ENCODE measurements at regions of chr10 and their contacts with region 1.

Region 1: GRCh38 chr10:11639831-11640764 is 28.6 kb upstream of the USP6NL start:
- DNase-seq: peak; percentile 37 to 78 (median 57)
- ATAC-seq: peak; percentile 91 to 95 (median 92)
- H3K4me3 ChIP-seq: no peak overlapping the region
- H3K27ac ChIP-seq: peak overlapping the region in 2 of 3 donors; percentile 30 to 71
- H3K4me1 ChIP-seq: peaks cover 0 to 19% (median 8%) of the 10 kb centered on the region in 4 donors
- H3K27me3 ChIP-seq: no peaks in the 10 kb centered on the region
- CTCF ChIP-seq: no peak
- POLR2A ChIP-seq: no peak

Region 2: DNA sequence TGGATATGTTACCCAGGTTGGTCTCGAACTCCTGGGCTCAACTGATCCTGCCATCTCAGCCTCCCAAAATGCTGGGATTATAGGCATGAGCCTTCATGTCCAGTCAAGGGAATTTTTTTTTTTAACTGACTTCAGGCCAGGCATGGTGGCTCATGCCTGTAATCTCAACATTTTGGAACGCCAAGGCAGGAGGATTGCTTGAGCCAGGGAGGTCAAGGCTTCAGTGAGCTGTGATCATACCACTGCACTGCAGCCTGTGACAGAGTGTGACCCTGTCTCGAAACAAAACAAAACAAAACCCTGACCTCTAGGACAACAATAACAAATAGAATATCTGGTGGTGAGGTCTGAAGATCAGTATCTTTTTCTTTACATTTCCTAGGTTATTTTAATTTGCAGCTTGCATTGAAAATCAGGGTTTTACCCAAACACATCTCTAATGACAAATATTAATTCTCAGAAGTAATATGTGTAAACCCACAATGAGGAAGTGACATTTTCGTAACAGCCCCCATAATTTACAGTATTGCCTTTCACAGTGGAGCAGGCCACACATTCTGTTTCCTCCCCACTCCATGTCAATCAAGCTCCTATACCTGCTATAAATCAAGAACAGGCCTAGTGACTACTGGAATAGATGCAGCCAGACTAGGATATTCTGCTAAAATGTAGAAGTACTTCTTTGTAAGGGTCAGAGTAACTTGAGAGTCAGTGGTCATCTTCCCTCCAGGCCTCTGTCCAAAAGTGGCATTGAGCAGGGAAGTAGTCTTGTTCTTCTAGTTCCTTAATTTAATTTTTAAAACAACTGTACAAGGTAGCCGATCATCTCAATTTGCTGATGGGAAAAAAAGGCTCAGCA is 58.8 kb after region 1 on chr10:
- intact Hi-C with region 1: loop called (anchors 10 kb)
- DNase-seq: peak in 2 of 3 donors; percentile 33 to 76
- ATAC-seq: peak; percentile 67 to 70 (median 67)
- H3K4me3 ChIP-seq: no peak overlapping the region
- H3K27ac ChIP-seq: peak overlapping the region; percentile 58 to 85 (median 85)
- H3K4me1 ChIP-seq: peaks cover 0 to 36% (median 12%) of the 10 kb centered on the region in 4 donors
- H3K27me3 ChIP-seq: no peaks in the 10 kb centered on the region
- CTCF ChIP-seq: no peak
- POLR2A ChIP-seq: no peak

Region 3: GRCh38 chr10:11729726-11730315 is 89.7 kb after region 1 on chr10:
- intact Hi-C with region 1: no loop called
- DNase-seq: no peak
- ATAC-seq: peak in 1 of 4 donors; percentile 26
- H3K4me3 ChIP-seq: no peak overlapping the region
- H3K27ac ChIP-seq: no peak overlapping the region
- H3K4me1 ChIP-seq: no peaks in the 10 kb centered on the region
- H3K27me3 ChIP-seq: no peaks in the 10 kb centered on the region
- CTCF ChIP-seq: no peak
- POLR2A ChIP-seq: no peak

Region 4: GRCh38 chr10:11806706-11807105 is 166.6 kb after region 1 on chr10:
- intact Hi-C with region 1: no loop called
- DNase-seq: no peak
- ATAC-seq: no peak
- H3K4me3 ChIP-seq: no peak overlapping the region
- H3K27ac ChIP-seq: no peak overlapping the region
- H3K4me1 ChIP-seq: no peaks in the 10 kb centered on the region
- H3K27me3 ChIP-seq: no peaks in the 10 kb centered on the region
- CTCF ChIP-seq: no peak
- POLR2A ChIP-seq: no peak

Region 5: GRCh38 chr10:12158111-12158510 is 518.0 kb after region 1 on chr10:
- intact Hi-C with region 1: no loop called
- DNase-seq: no peak
- ATAC-seq: no peak
- H3K4me3 ChIP-seq: no peak overlapping the region
- H3K27ac ChIP-seq: peak overlapping the region in 1 of 3 donors; percentile 4
- H3K4me1 ChIP-seq: peaks cover 0 to 26% (median 11%) of the 10 kb centered on the region in 4 donors
- H3K27me3 ChIP-seq: no peaks in the 10 kb centered on the region
- CTCF ChIP-seq: no peak
- POLR2A ChIP-seq: no peak